GM12878 (cell line): ENCODE measurements at regions of chr2 and their contacts with region 1.

Region 1: GRCh38 chr2:231411831-231412617 is 16.5 kb downstream of the B3GNT7 start:
- DNase-seq: no peak
- ATAC-seq: peak; percentile 100
- H3K4me3 ChIP-seq: peak overlapping the region; percentile 66
- H3K27ac ChIP-seq: no peak overlapping the region
- H3K4me1 ChIP-seq: no peaks in the 10 kb centered on the region
- H3K27me3 ChIP-seq: no peaks in the 10 kb centered on the region
- CTCF ChIP-seq: peak; percentile 72 to 95 (median 94)
- EP300 ChIP-seq: no peak
- POLR2A ChIP-seq: no peak
- RAD21 ChIP-seq: peak; percentile 87

Region 2: GRCh38 chr2:231222318-231223055 is 189.5 kb before region 1 on chr2:
- CTCF ChIA-PET with region 1: interaction called, 234 read pairs
- POLR2A ChIA-PET with region 1: no interaction called
- RAD21 ChIA-PET with region 1: interaction called, 51 read pairs
- SMC1A ChIA-PET with region 1: interaction called, 63 read pairs
- in situ Hi-C with region 1: no loop called
- intact Hi-C with region 1: loop called (anchors 1 kb)
- DNase-seq: peak; percentile 72
- ATAC-seq: peak; percentile 91
- H3K4me3 ChIP-seq: no peak overlapping the region
- H3K27ac ChIP-seq: peak overlapping the region; percentile 60
- H3K4me1 ChIP-seq: peaks cover 4% of the 10 kb centered on the region
- H3K27me3 ChIP-seq: no peaks in the 10 kb centered on the region
- CTCF ChIP-seq: 0 out of 6 replicates have a peak, but pooled peaks of 1 of the 3 experiments have one; percentile 8
- EP300 ChIP-seq: peak; percentile 94 to 99
- POLR2A ChIP-seq: no peak
- RAD21 ChIP-seq: no peak

Region 3: DNA sequence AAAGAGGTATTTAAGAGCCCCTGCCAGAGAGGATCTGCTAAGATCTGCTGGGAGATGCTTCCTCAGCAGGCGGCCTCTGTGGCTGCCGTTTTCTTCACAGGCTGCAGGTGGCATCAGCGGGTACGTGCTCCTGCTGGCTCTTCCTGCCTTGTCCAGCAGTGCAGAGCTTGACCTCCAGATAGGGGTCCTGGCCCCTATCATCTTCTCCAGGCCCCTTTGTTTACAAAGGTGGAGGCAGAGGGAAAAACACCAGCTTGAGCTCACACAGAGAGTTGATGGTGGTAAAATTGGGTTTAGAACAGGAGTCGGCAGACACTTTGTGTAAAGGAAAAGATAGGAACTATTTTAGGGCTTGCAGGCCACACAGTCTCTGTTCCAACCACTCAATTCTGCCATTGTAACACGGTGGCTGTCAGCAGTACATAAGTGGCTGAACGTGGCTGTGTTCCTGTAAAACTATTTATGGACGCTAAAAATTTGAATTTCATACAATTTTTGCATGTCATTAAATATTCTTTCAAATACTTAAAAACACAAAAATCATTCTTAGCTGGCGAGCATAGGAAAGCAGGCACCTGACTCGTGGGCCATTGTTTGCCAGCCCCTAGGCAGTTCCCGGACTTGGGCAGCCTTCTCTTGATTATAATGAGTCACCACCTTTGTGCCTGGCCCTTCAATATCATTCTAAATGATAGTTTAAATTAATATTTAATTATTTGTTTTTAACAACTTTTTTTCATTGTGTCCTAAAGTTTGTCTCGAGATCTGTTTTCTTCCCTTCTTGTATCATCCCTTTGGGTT is 114.7 kb before region 1 on chr2:
- CTCF ChIA-PET with region 1: interaction called, 82 read pairs
- POLR2A ChIA-PET with region 1: no interaction called
- RAD21 ChIA-PET with region 1: no interaction called
- SMC1A ChIA-PET with region 1: interaction called, 16 read pairs
- in situ Hi-C with region 1: no loop called
- intact Hi-C with region 1: no loop called
- DNase-seq: peak; percentile 36
- ATAC-seq: peak; percentile 81
- H3K4me3 ChIP-seq: no peak overlapping the region
- H3K27ac ChIP-seq: no peak overlapping the region
- H3K4me1 ChIP-seq: peaks cover 40% of the 10 kb centered on the region
- H3K27me3 ChIP-seq: no peaks in the 10 kb centered on the region
- CTCF ChIP-seq: peak; percentile 73 to 90 (median 81)
- EP300 ChIP-seq: no peak
- POLR2A ChIP-seq: no peak
- RAD21 ChIP-seq: peak; percentile 59

Region 4: DNA sequence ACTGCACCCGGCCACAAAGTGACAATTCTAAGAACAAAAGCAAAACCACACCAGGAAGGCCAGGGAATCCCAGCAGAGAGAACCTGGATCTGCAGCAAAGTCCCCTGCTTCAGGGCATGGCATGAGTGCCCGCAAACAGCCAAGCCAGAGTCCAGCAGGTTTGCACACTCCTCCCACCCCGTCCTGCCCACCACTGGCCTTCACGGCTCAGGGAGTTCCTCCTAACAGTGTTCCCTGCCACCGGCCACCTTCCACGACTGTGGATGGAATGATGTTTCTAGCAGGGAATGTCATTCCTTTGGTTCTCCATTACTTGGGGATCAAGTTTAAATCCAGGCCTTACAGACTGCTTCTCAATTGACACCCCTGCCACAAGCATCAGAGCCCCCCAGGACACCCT is 58.6 kb before region 1 on chr2:
- CTCF ChIA-PET with region 1: no interaction called
- POLR2A ChIA-PET with region 1: no interaction called
- RAD21 ChIA-PET with region 1: no interaction called
- SMC1A ChIA-PET with region 1: no interaction called
- in situ Hi-C with region 1: no loop called
- intact Hi-C with region 1: no loop called
- DNase-seq: no peak
- ATAC-seq: no peak
- H3K4me3 ChIP-seq: no peak overlapping the region
- H3K27ac ChIP-seq: no peak overlapping the region
- H3K4me1 ChIP-seq: no peaks in the 10 kb centered on the region
- H3K27me3 ChIP-seq: no peaks in the 10 kb centered on the region
- CTCF ChIP-seq: no peak
- EP300 ChIP-seq: no peak
- POLR2A ChIP-seq: no peak
- RAD21 ChIP-seq: no peak

Region 5: GRCh38 chr2:231425811-231426728 is 14.0 kb after region 1 on chr2:
- CTCF ChIA-PET with region 1: interaction called, 10 read pairs
- POLR2A ChIA-PET with region 1: interaction called, 3 read pairs
- RAD21 ChIA-PET with region 1: no interaction called
- SMC1A ChIA-PET with region 1: interaction called, 3 read pairs
- in situ Hi-C with region 1: no loop called
- intact Hi-C with region 1: no loop called
- DNase-seq: no peak
- ATAC-seq: peak; percentile 82
- H3K4me3 ChIP-seq: no peak overlapping the region
- H3K27ac ChIP-seq: no peak overlapping the region
- H3K4me1 ChIP-seq: peaks cover 12% of the 10 kb centered on the region
- H3K27me3 ChIP-seq: no peaks in the 10 kb centered on the region
- CTCF ChIP-seq: no peak
- EP300 ChIP-seq: no peak
- POLR2A ChIP-seq: no peak
- RAD21 ChIP-seq: no peak

Region 6: GRCh38 chr2:231648587-231649174 is 236.7 kb after region 1 on chr2:
- CTCF ChIA-PET with region 1: no interaction called
- POLR2A ChIA-PET with region 1: no interaction called
- RAD21 ChIA-PET with region 1: no interaction called
- SMC1A ChIA-PET with region 1: no interaction called
- in situ Hi-C with region 1: no loop called
- intact Hi-C with region 1: no loop called
- DNase-seq: no peak
- ATAC-seq: peak; percentile 100
- H3K4me3 ChIP-seq: no peak overlapping the region
- H3K27ac ChIP-seq: no peak overlapping the region
- H3K4me1 ChIP-seq: no peaks in the 10 kb centered on the region
- H3K27me3 ChIP-seq: no peaks in the 10 kb centered on the region
- CTCF ChIP-seq: peak; percentile 64 to 85 (median 74)
- EP300 ChIP-seq: no peak
- POLR2A ChIP-seq: no peak
- RAD21 ChIP-seq: peak; percentile 81